ENCODE measurements at regions of chr15 and their contacts with region 1.

Region 1: GRCh38 chr15:75453703-75454470 is 2.4 kb upstream of the SIN3A start:
- DNase-seq: peak; percentile 98 to 100 (median 99)
- H3K4me3 ChIP-seq: peak overlapping the region; percentile 70 to 86
- H3K4me3 Mint-ChIP-seq: peak overlapping the region; percentile 90 to 99 (median 97)
- H3K27ac ChIP-seq: peak overlapping the region; percentile 98
- H3K27ac Mint-ChIP-seq: peak overlapping the region; percentile 98 to 100 (median 99)
- H3K4me1 ChIP-seq: peaks cover 36% of the 10 kb centered on the region
- H3K4me1 Mint-ChIP-seq: peaks cover 26 to 55% (median 33%) of the 10 kb centered on the region in 4 donors
- H3K27me3 ChIP-seq: no peaks in the 10 kb centered on the region
- H3K27me3 Mint-ChIP-seq: peaks cover 0 to 2% of the 10 kb centered on the region in 2 donors

Region 2: GRCh38 chr15:74615508-74616365 is 838.1 kb before region 1 on chr15 and contains the start of gene CLK3:
- CTCF ChIA-PET with region 1: no interaction called
- POLR2A ChIA-PET with region 1: interaction called, 11 read pairs
- intact Hi-C with region 1: loop called (anchors 2 kb)
- DNase-seq: peak; percentile 95 to 97 (median 96)
- H3K4me3 ChIP-seq: peak within 1 kb of the TSS; percentile 98 to 100
- H3K4me3 Mint-ChIP-seq: peak within 1 kb of the TSS; percentile 92 to 98 (median 94)
- H3K27ac ChIP-seq: peak within 1 kb of the TSS; percentile 99
- H3K27ac Mint-ChIP-seq: peak within 1 kb of the TSS; percentile 98 to 99 (median 98)
- H3K4me1 ChIP-seq: peaks cover 44% of the 10 kb centered on the region
- H3K4me1 Mint-ChIP-seq: peaks cover 28 to 59% (median 31%) of the 10 kb centered on the region in 4 donors
- H3K27me3 ChIP-seq: no peaks in the 10 kb centered on the region
- H3K27me3 Mint-ChIP-seq: no peaks in the 10 kb centered on the region
- total RNA-seq, gene CLK3: 163 to 167 TPM

Region 3: GRCh38 chr15:75023181-75023871 is 430.6 kb before region 1 on chr15 and contains the start of gene PPCDC:
- CTCF ChIA-PET with region 1: no interaction called
- POLR2A ChIA-PET with region 1: interaction called, 5 read pairs
- intact Hi-C with region 1: loop called (anchors 1 kb)
- DNase-seq: peak; percentile 91 to 94 (median 92)
- H3K4me3 ChIP-seq: peak within 1 kb of the TSS; percentile 95 to 100
- H3K4me3 Mint-ChIP-seq: peak within 1 kb of the TSS; percentile 92 to 99 (median 96)
- H3K27ac ChIP-seq: peak within 1 kb of the TSS; percentile 76
- H3K27ac Mint-ChIP-seq: peak within 1 kb of the TSS; percentile 71 to 97 (median 93)
- H3K4me1 ChIP-seq: peaks cover 20% of the 10 kb centered on the region
- H3K4me1 Mint-ChIP-seq: peaks cover 11 to 28% (median 18%) of the 10 kb centered on the region in 4 donors
- H3K27me3 ChIP-seq: no peaks in the 10 kb centered on the region
- H3K27me3 Mint-ChIP-seq: no peaks in the 10 kb centered on the region
- total RNA-seq, gene PPCDC: 14.1 to 15.2 TPM

Region 4: DNA sequence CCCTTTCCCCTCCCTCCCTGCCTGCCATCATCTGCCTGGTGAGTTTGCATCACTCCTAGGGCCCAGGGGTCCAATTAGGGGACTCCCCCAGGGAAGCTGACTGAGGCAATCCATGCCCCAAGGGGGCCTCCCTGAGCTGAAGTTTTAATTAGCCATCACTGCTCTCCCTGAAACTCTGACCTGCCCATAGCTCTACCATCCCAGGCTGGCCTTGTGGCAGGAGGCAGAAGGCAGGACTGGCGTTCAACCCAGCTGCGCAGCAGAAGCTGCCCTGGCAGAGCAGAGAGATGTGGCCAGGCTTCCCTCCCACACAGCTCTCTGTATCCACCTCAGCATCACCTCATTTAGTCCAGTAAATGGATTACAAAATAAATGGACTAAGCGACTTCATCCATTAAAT is 259.9 kb before region 1 on chr15:
- CTCF ChIA-PET with region 1: no interaction called
- POLR2A ChIA-PET with region 1: no interaction called
- intact Hi-C with region 1: no loop called
- DNase-seq: no peak
- H3K4me3 ChIP-seq: no peak overlapping the region
- H3K4me3 Mint-ChIP-seq: no peak overlapping the region
- H3K27ac ChIP-seq: no peak overlapping the region
- H3K27ac Mint-ChIP-seq: no peak overlapping the region
- H3K4me1 ChIP-seq: no peaks in the 10 kb centered on the region
- H3K4me1 Mint-ChIP-seq: peaks cover 0 to 2% (median 0%) of the 10 kb centered on the region in 4 donors
- H3K27me3 ChIP-seq: no peaks in the 10 kb centered on the region
- H3K27me3 Mint-ChIP-seq: peaks cover 0 to 4% of the 10 kb centered on the region in 2 donors

Region 5: GRCh38 chr15:75416584-75416983 is 37.3 kb before region 1 on chr15:
- CTCF ChIA-PET with region 1: interaction called, 3 read pairs
- POLR2A ChIA-PET with region 1: interaction called, 10 read pairs
- intact Hi-C with region 1: no loop called
- DNase-seq: no peak
- H3K4me3 ChIP-seq: no peak overlapping the region
- H3K4me3 Mint-ChIP-seq: no peak overlapping the region
- H3K27ac ChIP-seq: no peak overlapping the region
- H3K27ac Mint-ChIP-seq: peak overlapping the region in 1 of 7 donors; percentile 60
- H3K4me1 ChIP-seq: no peaks in the 10 kb centered on the region
- H3K4me1 Mint-ChIP-seq: peaks cover 8 to 18% (median 11%) of the 10 kb centered on the region in 4 donors
- H3K27me3 ChIP-seq: no peaks in the 10 kb centered on the region
- H3K27me3 Mint-ChIP-seq: no peaks in the 10 kb centered on the region

Region 6: GRCh38 chr15:75606711-75607699 is 153.1 kb after region 1 on chr15:
- CTCF ChIA-PET with region 1: interaction called, 5 read pairs
- POLR2A ChIA-PET with region 1: interaction called, 31 read pairs
- intact Hi-C with region 1: no loop called
- DNase-seq: peak; percentile 43 to 57 (median 52)
- H3K4me3 ChIP-seq: peak overlapping the region; percentile 5 to 40
- H3K4me3 Mint-ChIP-seq: peak overlapping the region; percentile 71 to 82 (median 78)
- H3K27ac ChIP-seq: peak overlapping the region; percentile 39
- H3K27ac Mint-ChIP-seq: peak overlapping the region; percentile 78 to 94 (median 91)
- H3K4me1 ChIP-seq: peaks cover 47% of the 10 kb centered on the region
- H3K4me1 Mint-ChIP-seq: peaks cover 34 to 56% (median 46%) of the 10 kb centered on the region in 4 donors
- H3K27me3 ChIP-seq: no peaks in the 10 kb centered on the region
- H3K27me3 Mint-ChIP-seq: no peaks in the 10 kb centered on the region

Region 7: GRCh38 chr15:75842722-75843551 is 389.1 kb after region 1 on chr15 and contains the start of gene UBE2Q2:
- CTCF ChIA-PET with region 1: no interaction called
- POLR2A ChIA-PET with region 1: interaction called, 5 read pairs
- intact Hi-C with region 1: loop called (anchors 5 kb)
- DNase-seq: peak; percentile 69 to 78 (median 71)
- H3K4me3 ChIP-seq: peak within 1 kb of the TSS; percentile 57 to 71
- H3K4me3 Mint-ChIP-seq: peak within 1 kb of the TSS; percentile 92 to 99 (median 96)
- H3K27ac ChIP-seq: peak within 1 kb of the TSS; percentile 67
- H3K27ac Mint-ChIP-seq: peak within 1 kb of the TSS; percentile 91 to 98 (median 96)
- H3K4me1 ChIP-seq: peaks cover 40% of the 10 kb centered on the region
- H3K4me1 Mint-ChIP-seq: peaks cover 32 to 53% (median 47%) of the 10 kb centered on the region in 4 donors
- H3K27me3 ChIP-seq: no peaks in the 10 kb centered on the region
- H3K27me3 Mint-ChIP-seq: no peaks in the 10 kb centered on the region
- total RNA-seq, gene UBE2Q2: 38.0 to 42.9 TPM